Activated CD4-positive, alpha-beta T cell treated with anti-CD3 and anti-CD28 coated beads for 36 hours (primary cell): ENCODE measurements at regions of chr6 and their contacts with region 1.

Region 1: DNA sequence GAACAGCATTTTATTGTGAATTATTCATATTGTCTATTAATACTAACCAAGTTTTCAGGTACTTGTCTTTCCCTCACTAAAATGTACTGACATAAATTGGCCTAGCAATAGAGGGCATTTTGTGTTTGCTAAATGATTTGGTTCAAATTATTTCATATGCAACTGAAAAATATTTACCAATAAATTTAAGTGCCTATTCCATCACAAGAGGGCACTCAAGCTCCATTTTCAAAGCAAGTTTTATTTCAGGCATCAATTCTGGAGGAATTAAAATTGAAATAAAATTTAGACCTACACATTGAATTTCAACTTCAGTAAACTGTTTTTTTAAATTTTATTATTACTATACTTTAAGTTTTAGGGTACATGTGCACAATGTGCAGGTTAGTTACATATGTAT is 114.3 kb upstream of the SYNCRIP start:
- DNase-seq: no peak
- ATAC-seq: no peak
- H3K4me3 Mint-ChIP-seq: no peak overlapping the region
- H3K27ac Mint-ChIP-seq: no peak overlapping the region
- H3K4me1 Mint-ChIP-seq: no peaks in the 10 kb centered on the region
- H3K27me3 Mint-ChIP-seq: peaks cover 2% of the 10 kb centered on the region

Region 2: GRCh38 chr6:85660181-85660611 is 96.8 kb before region 1 on chr6:
- CTCF ChIA-PET with region 1: no interaction called
- POLR2A ChIA-PET with region 1: no interaction called
- intact Hi-C with region 1: no loop called
- DNase-seq: no peak
- ATAC-seq: peak; percentile 49
- H3K4me3 Mint-ChIP-seq: no peak overlapping the region
- H3K27ac Mint-ChIP-seq: no peak overlapping the region
- H3K4me1 Mint-ChIP-seq: no peaks in the 10 kb centered on the region
- H3K27me3 Mint-ChIP-seq: no peaks in the 10 kb centered on the region

Region 3: GRCh38 chr6:86856937-86857563 is 1100.1 kb after region 1 on chr6:
- CTCF ChIA-PET with region 1: no interaction called
- POLR2A ChIA-PET with region 1: no interaction called
- intact Hi-C with region 1: loop called in 1 of 2 experiments (anchors 5 kb)
- DNase-seq: peak; percentile 53
- ATAC-seq: no peak
- H3K4me3 Mint-ChIP-seq: no peak overlapping the region
- H3K27ac Mint-ChIP-seq: no peak overlapping the region
- H3K4me1 Mint-ChIP-seq: no peaks in the 10 kb centered on the region
- H3K27me3 Mint-ChIP-seq: peaks cover 5% of the 10 kb centered on the region